OCI-LY7 (cell line): ENCODE measurements at regions of chr1 and their contacts with region 1.

Region 1: DNA sequence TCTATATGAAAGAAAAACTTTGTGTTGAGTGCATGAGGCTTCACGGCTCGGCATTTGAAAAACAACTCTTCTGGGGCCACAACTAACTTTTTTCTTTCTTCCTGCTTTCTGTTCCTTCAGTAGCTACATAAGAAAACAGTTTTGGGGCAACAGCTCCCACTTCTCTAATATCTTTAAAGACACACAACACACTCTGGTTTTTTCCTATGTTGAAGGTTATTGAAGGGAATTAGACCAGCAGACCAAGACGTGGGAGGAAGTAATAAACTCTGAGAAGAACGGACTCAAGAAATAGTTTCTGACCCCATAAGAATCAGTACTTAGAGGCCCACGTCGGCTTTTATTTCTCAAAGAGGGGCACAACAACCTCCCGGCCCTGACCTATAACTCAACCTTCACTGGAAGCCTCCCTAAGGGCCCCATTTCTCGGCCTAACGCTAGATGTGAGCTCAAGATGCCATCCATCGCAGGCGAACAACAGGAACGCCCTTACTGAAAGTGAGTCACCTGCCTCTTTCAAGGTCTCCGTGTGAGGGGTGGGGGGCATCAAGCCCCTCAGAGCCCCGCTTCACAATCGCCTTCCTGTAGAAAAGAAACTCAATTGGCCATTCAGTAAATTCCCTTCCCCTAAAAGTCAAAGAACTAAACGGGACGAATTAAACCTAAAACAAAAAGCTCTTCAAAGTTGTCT is 844 bp downstream of the ZMYM6 start:
- DNase-seq: peak; percentile 45
- H3K4me3 ChIP-seq: peak overlapping the region; percentile 86
- H3K27ac ChIP-seq: peak overlapping the region; percentile 53
- H3K4me1 ChIP-seq: peaks cover 9% of the 10 kb centered on the region
- CTCF ChIP-seq: no peak

Region 2: GRCh38 chr1:34984793-34985608 is 45.9 kb before region 1 on chr1 and contains the start of gene TMEM35B:
- CTCF ChIA-PET with region 1: no interaction called
- POLR2A ChIA-PET with region 1: interaction called, 27 read pairs
- intact Hi-C with region 1: no loop called
- DNase-seq: peak; percentile 78
- H3K4me3 ChIP-seq: peak within 1 kb of the TSS; percentile 76
- H3K27ac ChIP-seq: peak within 1 kb of the TSS; percentile 39
- H3K4me1 ChIP-seq: peaks cover 30% of the 10 kb centered on the region
- CTCF ChIP-seq: peak; percentile 48
- total RNA-seq, gene TMEM35B: 15.5 and 16.5 TPM in 2 replicates

Region 3: DNA sequence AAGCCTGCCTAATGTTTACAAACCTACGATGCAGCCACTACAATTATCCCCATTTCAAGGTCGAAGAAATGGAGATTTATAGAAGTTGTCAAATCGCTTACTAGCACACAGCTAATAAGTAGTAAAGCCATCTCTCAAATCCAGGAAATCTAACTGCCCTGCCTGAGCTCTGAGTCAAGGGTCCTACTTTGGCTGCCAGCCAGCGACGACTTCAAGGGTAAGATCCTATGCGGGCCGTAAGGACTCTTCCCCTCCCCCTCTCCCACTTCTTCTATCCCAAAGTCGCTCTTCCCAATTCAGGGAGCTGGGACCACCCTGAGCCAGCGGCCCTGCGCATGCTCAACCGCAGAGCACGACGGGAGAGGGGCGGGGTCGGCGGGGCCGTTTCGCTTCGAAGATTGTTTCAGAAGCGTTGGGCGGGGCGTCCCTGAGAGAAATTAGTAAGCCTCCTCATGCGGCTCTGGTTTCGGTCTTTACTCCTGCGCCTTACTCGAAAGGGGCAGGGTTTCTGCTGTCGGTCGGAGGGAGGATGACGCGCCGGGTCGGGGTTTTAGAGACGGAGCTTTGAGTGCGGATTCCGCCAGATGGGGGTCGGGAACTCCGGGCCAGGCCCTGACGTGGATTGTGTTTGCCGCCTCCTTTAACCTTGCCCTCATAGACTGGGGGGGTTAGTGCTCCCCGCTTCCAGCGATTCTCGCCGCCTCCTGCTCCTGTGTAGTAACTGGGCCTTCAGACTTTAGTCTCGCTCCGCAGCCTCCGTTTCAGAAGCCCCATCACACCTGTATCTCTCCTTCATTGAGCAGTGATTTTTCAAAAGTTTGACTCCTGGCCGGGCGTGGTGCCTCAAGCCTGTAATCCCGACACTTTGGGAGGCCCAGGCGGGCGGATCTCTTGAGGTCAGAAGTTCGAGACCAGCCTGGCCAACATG is 48.4 kb after region 1 on chr1 and contains the start of gene ZMYM1:
- CTCF ChIA-PET with region 1: no interaction called
- POLR2A ChIA-PET with region 1: interaction called, 5 read pairs
- intact Hi-C with region 1: loop called (anchors 1 kb)
- DNase-seq: peak; percentile 87
- H3K4me3 ChIP-seq: peak within 1 kb of the TSS; percentile 79
- H3K27ac ChIP-seq: peak within 1 kb of the TSS; percentile 85
- H3K4me1 ChIP-seq: peaks cover 15% of the 10 kb centered on the region
- CTCF ChIP-seq: no peak
- total RNA-seq, gene ZMYM1: 6.1 and 6.9 TPM in 2 replicates